IMR-90 (cell line): ENCODE measurements at regions of chr1 and their contacts with region 1.

Region 1: GRCh38 chr1:77219166-77219887 is at the start of gene PIGK:
- DNase-seq: peak; percentile 79
- ATAC-seq: peak; percentile 98
- H3K4me3 ChIP-seq: peak within 1 kb of the TSS; percentile 84
- H3K27ac ChIP-seq: peak within 1 kb of the TSS; percentile 47
- H3K4me1 ChIP-seq: no peaks in the 10 kb centered on the region
- H3K27me3 ChIP-seq: no peaks in the 10 kb centered on the region
- CTCF ChIP-seq: no peak
- POLR2A ChIP-seq: no peak
- RAD21 ChIP-seq: 0 out of 2 replicates have a peak, but pooled peaks have one; percentile 2
- total RNA-seq, gene PIGK: 15.6 and 39.2 TPM in 2 replicates

Region 2: DNA sequence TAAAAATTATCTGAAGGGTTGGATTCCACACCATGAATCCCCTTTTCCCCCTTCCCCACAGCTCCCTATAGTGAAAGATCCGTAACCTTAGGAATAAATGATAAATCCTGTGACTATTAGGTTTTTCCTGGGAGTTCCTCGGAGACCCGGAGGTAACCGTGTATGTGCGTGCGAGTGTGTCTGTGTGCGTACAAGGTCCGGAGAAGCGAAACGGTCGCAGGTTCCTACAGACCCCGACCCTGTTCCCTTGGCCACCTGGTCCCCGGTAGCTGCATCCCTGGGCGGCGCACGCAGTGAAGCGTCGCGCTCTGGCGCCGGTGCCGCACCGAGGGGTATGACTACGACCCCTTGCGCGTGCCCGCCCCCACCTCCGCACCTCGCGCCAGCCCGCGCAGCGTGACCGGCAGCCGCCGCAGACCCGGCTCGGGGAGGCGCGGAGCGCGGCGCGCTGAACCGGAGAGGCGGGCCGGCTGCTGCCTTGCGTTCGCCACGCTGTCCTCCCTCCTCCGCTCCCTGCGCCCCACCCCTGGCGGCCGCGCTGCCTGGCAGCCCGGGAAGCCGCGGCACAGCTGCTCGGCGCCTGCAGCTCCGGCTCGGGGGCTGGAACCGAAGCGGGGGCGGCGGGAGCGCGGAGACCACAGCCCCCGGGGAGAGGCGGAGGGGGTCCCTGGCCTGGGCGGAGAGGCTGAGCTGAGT is 62.3 kb after region 1 on chr1 and contains the start of gene AK5:
- CTCF ChIA-PET with region 1: no interaction called
- POLR2A ChIA-PET with region 1: no interaction called
- dilution Hi-C with region 1: no loop called
- in situ Hi-C with region 1: no loop called
- intact Hi-C with region 1: loop called (anchors 2 kb)
- DNase-seq: peak; percentile 48
- ATAC-seq: peak; percentile 92
- H3K4me3 ChIP-seq: peak within 1 kb of the TSS; percentile 91
- H3K27ac ChIP-seq: peak within 1 kb of the TSS; percentile 56
- H3K4me1 ChIP-seq: 0 out of 2 replicates have a peak, but pooled peaks cover 2% of the 10 kb centered on the region
- H3K27me3 ChIP-seq: no peaks in the 10 kb centered on the region
- CTCF ChIP-seq: no peak
- POLR2A ChIP-seq: no peak
- RAD21 ChIP-seq: no peak
- total RNA-seq, gene AK5: 25.8 and 54.7 TPM in 2 replicates